CD4-positive, alpha-beta memory T cell (primary cell): ENCODE measurements at regions of chrX and their contacts with region 1.

Region 1: GRCh38 chrX:110402479-110403230 is 44.0 kb downstream of the RTL9 start:
- DNase-seq: no peak
- H3K4me3 ChIP-seq: no peak overlapping the region
- H3K4me3 Mint-ChIP-seq: no peak overlapping the region
- H3K27ac ChIP-seq: no peak overlapping the region
- H3K27ac Mint-ChIP-seq: peak overlapping the region in 1 of 7 donors; percentile 43
- H3K4me1 ChIP-seq: no peaks in the 10 kb centered on the region
- H3K4me1 Mint-ChIP-seq: peaks cover 0 to 1% (median 0%) of the 10 kb centered on the region in 4 donors
- H3K27me3 ChIP-seq: no peaks in the 10 kb centered on the region
- H3K27me3 Mint-ChIP-seq: peaks cover 0 to 6% of the 10 kb centered on the region in 2 donors

Region 2: GRCh38 chrX:110412971-110413721 is 10.5 kb after region 1 on chrX:
- CTCF ChIA-PET with region 1: interaction called, 11 read pairs
- POLR2A ChIA-PET with region 1: no interaction called
- intact Hi-C with region 1: no loop called
- DNase-seq: peak; percentile 53 to 68 (median 63)
- H3K4me3 ChIP-seq: no peak overlapping the region
- H3K4me3 Mint-ChIP-seq: no peak overlapping the region
- H3K27ac ChIP-seq: no peak overlapping the region
- H3K27ac Mint-ChIP-seq: no peak overlapping the region
- H3K4me1 ChIP-seq: no peaks in the 10 kb centered on the region
- H3K4me1 Mint-ChIP-seq: peaks cover 0 to 4% (median 2%) of the 10 kb centered on the region in 4 donors
- H3K27me3 ChIP-seq: no peaks in the 10 kb centered on the region
- H3K27me3 Mint-ChIP-seq: peaks cover 1 to 3% of the 10 kb centered on the region in 2 donors